ENCODE measurements at regions of chr2 and their contacts with region 1.

Region 1: DNA sequence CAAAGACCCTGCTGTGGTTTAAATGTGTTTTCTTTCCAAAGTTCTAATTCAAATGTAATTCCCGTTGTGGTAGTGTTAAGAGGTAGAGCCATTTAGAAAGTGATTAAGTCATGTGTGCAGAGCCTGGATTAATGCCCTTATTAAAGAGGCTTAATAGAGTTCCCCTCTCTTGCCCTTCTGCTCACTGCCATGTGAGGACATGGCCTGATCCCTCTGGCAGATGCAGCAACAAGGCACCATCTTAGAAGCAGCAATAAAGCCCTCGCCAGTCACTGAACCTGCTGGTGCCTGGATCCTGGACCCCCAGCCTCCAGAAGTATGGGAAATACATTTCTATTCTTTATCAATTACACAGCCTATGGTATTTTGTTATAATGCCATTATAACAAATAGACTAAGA is 485.2 kb downstream of the DCDC2C start:
- ATAC-seq: no peak
- H3K4me3 ChIP-seq: no peak overlapping the region
- H3K27ac ChIP-seq: no peak overlapping the region
- H3K4me1 ChIP-seq: no peaks in the 10 kb centered on the region

Region 2: DNA sequence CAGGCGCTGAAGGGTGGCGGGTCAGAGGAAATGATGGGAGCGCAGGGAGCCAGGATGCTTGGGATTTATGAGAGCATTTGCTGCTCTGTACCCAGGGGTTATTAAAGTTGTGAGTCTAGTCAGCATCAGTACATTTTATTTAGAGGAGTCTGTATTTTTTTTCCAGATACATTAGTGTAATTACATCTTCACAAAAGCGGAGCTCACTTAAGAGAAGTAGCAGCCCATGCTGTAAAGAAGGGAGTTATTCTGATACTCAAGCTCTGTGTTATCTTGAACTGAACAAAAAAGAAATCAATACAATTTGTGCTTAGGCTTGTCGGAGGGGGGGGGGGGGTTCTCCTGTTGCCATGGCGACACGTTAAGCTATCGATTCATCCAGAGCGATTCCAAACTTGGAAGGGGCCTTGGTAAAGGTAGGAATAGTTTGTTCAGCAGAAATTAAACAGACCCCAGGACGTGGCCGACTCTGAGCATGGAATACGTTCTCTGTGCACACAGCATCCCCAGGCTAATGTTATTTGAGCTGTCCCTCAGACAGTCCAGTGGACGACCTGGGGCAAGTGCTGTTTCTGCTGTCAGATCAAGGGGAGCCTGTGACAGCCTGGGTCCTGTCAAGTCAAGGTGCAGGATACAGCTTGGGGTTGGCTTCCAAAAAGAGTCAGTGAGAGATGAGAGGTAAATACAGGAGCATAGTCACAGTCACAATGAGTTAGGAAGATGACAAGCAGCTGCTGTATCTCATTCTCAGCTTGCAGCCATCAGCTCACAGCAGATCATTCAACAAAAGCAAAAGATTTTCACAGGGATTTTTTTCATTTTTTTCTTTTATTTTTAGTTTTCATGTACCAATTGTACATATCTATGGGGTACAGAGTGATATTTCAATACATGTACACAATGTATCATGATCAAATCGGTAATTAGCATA is 97.6 kb before region 1 on chr2:
- in situ Hi-C with region 1: no loop called
- ATAC-seq: peak in 5 of 8 experiments; percentile 35 to 87 (median 65)
- H3K4me3 ChIP-seq: peak overlapping the region in 2 of 5 donors; percentile 12 to 21
- H3K27ac ChIP-seq: peak overlapping the region in 1 of 2 donors; percentile 49
- H3K4me1 ChIP-seq: peaks cover 13 to 21% of the 10 kb centered on the region in 2 donors

Region 3: DNA sequence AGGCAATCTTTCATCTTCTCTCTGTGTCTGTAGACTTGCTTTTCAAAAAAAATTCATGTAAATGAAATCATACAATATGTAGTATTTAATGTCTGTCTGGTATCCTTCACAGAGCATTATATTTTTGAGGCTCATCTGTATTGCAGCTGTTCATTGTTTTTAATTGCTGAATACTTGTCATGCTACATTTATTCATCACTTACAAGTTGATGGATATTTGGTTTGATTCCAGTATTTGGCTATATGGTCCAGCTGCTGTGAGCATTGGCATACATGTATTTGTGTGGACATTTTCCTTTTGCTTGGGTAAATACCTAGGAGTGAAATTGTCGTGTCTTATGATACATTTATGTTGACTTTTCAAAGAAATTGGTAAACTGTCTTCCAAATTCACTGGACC is 43.8 kb before region 1 on chr2:
- in situ Hi-C with region 1: loop called in 1 of 9 experiments (anchors 5 kb)
- ATAC-seq: no peak
- H3K4me3 ChIP-seq: no peak overlapping the region
- H3K27ac ChIP-seq: no peak overlapping the region
- H3K4me1 ChIP-seq: peaks cover 0 to 15% of the 10 kb centered on the region in 2 donors

Region 4: DNA sequence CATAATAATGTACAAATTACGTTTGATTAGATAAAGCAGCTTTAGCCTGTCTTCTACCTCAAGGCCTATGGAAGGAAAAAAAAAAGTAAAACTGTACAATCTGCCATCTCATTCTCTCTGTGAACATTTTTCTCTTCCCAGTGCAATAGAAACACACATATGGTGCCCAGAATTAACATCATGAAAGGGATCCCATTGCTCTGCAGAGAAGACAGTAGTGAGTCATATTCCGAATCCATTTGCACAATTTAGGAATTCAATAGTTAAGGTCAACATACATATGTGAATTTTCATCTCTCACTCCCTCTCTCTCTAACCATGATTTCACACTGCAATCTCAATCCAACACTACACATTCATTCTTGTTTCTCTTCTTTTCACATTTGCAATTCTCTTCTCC is 862.7 kb after region 1 on chr2:
- in situ Hi-C with region 1: no loop called
- ATAC-seq: peak in 6 of 8 experiments; percentile 32 to 97 (median 62)
- H3K4me3 ChIP-seq: no peak overlapping the region
- H3K27ac ChIP-seq: no peak overlapping the region
- H3K4me1 ChIP-seq: peaks cover 0 to 6% of the 10 kb centered on the region in 2 donors